Activated T-helper 1 cell treated with anti-CD3 and anti-CD28 coated beads, Interleukin-12 subunit alpha, Interleukin-12 subunit beta, Interleukin-2, Interleukin-4 antibody, amounts not matched to agents 30 ng/mL and 10 ng/mL and 1 ng/mL, durations not matched to agents 14 hours and 24 hours and 36 hours (primary cell): ENCODE measurements at regions of chr2 and their contacts with region 1.

Region 1: GRCh38 chr2:197293252-197294007 is 17.1 kb downstream of the ANKRD44 start:
- DNase-seq: no peak
- H3K4me3 Mint-ChIP-seq: peak overlapping the region; percentile 68
- H3K27ac Mint-ChIP-seq: peak overlapping the region; percentile 89
- H3K4me1 Mint-ChIP-seq: peaks cover 88% of the 10 kb centered on the region
- H3K27me3 Mint-ChIP-seq: no peaks in the 10 kb centered on the region

Region 2: GRCh38 chr2:197216361-197216979 is 77.0 kb before region 1 on chr2:
- intact Hi-C with region 1: no loop called
- DNase-seq: no peak
- H3K4me3 Mint-ChIP-seq: peak overlapping the region; percentile 80
- H3K27ac Mint-ChIP-seq: peak overlapping the region; percentile 94
- H3K4me1 Mint-ChIP-seq: peaks cover 83% of the 10 kb centered on the region
- H3K27me3 Mint-ChIP-seq: no peaks in the 10 kb centered on the region

Region 3: GRCh38 chr2:197268786-197269584 is 24.4 kb before region 1 on chr2:
- intact Hi-C with region 1: loop called (anchors 1 kb)
- DNase-seq: no peak
- H3K4me3 Mint-ChIP-seq: peak overlapping the region; percentile 6
- H3K27ac Mint-ChIP-seq: peak overlapping the region; percentile 90
- H3K4me1 Mint-ChIP-seq: peaks cover 90% of the 10 kb centered on the region
- H3K27me3 Mint-ChIP-seq: no peaks in the 10 kb centered on the region

Region 4: DNA sequence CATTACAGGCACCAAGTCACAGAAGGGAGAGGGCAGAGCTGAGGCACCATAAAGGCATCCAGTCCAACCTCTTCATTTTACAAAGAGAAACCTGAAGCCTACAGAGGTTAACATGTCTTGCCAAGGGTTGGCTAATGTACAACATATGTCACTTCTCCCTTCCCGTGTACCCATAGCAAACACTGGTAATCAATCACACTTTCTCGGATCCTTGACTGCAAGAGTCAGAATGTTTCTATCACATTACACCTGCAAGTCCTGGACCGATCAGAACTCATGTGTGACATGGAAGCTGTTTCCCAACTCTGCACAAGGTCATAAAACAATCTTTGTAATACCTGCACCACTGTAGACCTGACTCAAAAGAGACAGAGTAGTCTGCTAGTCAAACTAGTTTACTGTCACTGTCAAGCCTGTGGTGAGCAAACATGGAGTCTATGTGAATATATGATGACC is 11.2 kb after region 1 on chr2:
- intact Hi-C with region 1: loop called (anchors 1 kb)
- DNase-seq: no peak
- H3K4me3 Mint-ChIP-seq: peak overlapping the region; percentile 84
- H3K27ac Mint-ChIP-seq: peak overlapping the region; percentile 95
- H3K4me1 Mint-ChIP-seq: peaks cover 87% of the 10 kb centered on the region
- H3K27me3 Mint-ChIP-seq: no peaks in the 10 kb centered on the region